Astrocyte of the cerebellum (primary cell): ENCODE measurements at regions of chr13 and their contacts with region 1.

Region 1: GRCh38 chr13:84831666-84832657 is 949.7 kb upstream of the SLITRK1 start:
- DNase-seq: no peak
- H3K4me3 ChIP-seq: no peak overlapping the region
- CTCF ChIP-seq: no peak

Region 2: DNA sequence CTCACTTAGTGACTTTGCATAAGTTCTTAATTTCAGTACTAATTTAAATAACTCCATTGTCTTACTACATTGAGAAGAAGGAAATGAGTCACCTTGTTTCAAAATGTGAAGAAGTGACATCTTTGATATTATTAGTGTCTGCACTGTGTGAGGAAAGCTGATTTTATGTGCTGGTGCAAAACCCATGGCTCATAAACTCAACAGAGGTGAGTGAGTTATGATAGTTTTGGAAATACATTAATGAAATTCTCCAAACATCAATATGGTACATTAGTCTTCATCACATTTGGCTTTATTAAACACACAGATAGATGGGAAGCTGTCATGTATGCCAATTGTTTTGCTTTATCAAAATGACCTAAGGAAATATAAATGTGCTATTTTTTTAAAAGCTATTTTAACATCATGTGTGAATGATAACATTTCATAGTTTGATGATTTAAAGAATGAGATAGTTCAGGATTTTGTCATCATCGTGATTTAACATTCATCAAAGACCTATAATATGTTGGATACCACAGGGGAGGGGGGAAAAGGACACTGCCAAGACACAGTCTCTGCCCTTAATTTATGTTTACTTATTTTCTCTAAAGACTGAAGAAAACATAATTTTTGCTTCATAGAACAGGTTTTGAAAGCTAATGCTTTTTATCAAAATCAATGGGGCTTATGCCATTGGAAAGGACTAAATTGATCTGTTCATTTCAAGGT is 47.4 kb before region 1 on chr13:
- in situ Hi-C with region 1: loop called (anchors 5 kb)
- DNase-seq: no peak
- H3K4me3 ChIP-seq: no peak overlapping the region
- CTCF ChIP-seq: no peak